ENCODE measurements at regions of chr4 and their contacts with region 1.

Region 1: GRCh38 chr4:6926681-6927478 is 17.3 kb downstream of the TBC1D14 start:
- DNase-seq: peak in 33 of 35 experiments; percentile 38 to 74 (median 63)
- ATAC-seq: peak; percentile 83 to 91 (median 88)
- H3K4me3 ChIP-seq: peak overlapping the region; percentile 0 to 15
- H3K4me3 Mint-ChIP-seq: peak overlapping the region; percentile 68 to 77 (median 72)
- H3K27ac ChIP-seq: peak overlapping the region; percentile 49
- H3K27ac Mint-ChIP-seq: peak overlapping the region; percentile 91 to 95
- H3K4me1 ChIP-seq: peaks cover 33 to 61% of the 10 kb centered on the region in 2 experiments
- H3K4me1 Mint-ChIP-seq: peaks cover 73 to 86% (median 86%) of the 10 kb centered on the region in 3 donors
- H3K27me3 ChIP-seq: no peaks in the 10 kb centered on the region
- H3K27me3 Mint-ChIP-seq: no peaks in the 10 kb centered on the region

Region 2: GRCh38 chr4:6942238-6942800 is 15.4 kb after region 1 on chr4:
- CTCF ChIA-PET with region 1: interaction called in 1 of 2 experiments, 10 read pairs
- POLR2A ChIA-PET with region 1: interaction called in 1 of 2 experiments, 3 read pairs
- DNase-seq: peak in 34 of 35 experiments; percentile 21 to 69 (median 48)
- ATAC-seq: peak; percentile 87 to 90 (median 88)
- H3K4me3 ChIP-seq: peak overlapping the region; percentile 11 to 35
- H3K4me3 Mint-ChIP-seq: peak overlapping the region; percentile 73 to 81 (median 75)
- H3K27ac ChIP-seq: peak overlapping the region; percentile 76
- H3K27ac Mint-ChIP-seq: peak overlapping the region; percentile 94 to 96
- H3K4me1 ChIP-seq: peaks cover 39 to 73% of the 10 kb centered on the region in 2 experiments
- H3K4me1 Mint-ChIP-seq: peaks cover 69 to 86% (median 82%) of the 10 kb centered on the region in 3 donors
- H3K27me3 ChIP-seq: no peaks in the 10 kb centered on the region
- H3K27me3 Mint-ChIP-seq: no peaks in the 10 kb centered on the region

Region 3: DNA sequence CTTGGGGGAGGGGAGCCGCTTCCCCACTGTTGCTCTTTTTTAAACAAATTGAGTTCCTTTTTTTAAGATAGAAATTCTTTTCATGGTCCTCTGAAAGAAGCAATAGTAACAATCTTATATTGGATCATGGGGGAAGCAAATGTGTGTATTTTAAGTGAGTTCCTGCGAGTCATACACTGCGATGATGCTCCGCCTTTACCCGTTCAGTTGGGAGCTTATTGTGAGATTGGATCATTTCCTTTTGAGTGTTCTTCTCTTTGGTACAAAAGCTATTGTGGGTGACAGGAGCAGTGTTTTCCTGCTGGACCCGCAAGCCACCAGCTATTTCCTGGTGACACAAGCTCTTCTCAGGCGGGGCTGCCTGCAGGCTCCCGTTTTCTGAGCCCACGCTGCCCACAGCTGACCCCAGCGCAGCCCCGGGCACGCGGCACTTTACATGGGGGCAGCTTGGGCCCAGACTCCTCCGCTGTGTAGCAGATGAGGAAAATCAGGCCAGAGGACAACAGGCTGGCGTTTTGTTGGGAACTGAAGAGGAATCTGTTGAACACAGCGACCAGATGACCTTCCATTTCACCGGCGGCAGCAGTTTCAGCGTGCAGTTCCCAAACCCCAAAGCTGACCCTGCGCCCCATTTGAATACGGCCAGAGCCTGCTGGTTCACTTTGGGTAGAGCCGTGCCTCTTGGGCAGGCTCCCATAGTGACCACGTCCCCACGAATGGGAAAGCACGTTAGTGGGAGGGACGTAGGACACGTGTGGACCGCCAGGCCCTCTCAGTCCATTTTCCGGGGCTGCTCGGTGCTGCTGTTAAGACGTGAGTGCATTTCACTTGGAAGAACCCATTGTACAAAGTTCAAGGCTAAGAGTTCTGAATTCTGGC is 128.5 kb after region 1 on chr4:
- CTCF ChIA-PET with region 1: no interaction called
- POLR2A ChIA-PET with region 1: no interaction called
- DNase-seq: no peak
- ATAC-seq: no peak
- H3K4me3 ChIP-seq: no peak overlapping the region
- H3K4me3 Mint-ChIP-seq: no peak overlapping the region
- H3K27ac ChIP-seq: no peak overlapping the region
- H3K27ac Mint-ChIP-seq: no peak overlapping the region
- H3K4me1 ChIP-seq: peaks cover 0 to 36% of the 10 kb centered on the region in 2 experiments
- H3K4me1 Mint-ChIP-seq: peaks cover 22 to 30% (median 24%) of the 10 kb centered on the region in 3 donors
- H3K27me3 ChIP-seq: no peaks in the 10 kb centered on the region
- H3K27me3 Mint-ChIP-seq: no peaks in the 10 kb centered on the region

Region 4: GRCh38 chr4:7876201-7876875 is 949.5 kb after region 1 on chr4:
- CTCF ChIA-PET with region 1: no interaction called
- POLR2A ChIA-PET with region 1: interaction called in 1 of 2 experiments, 13 read pairs
- DNase-seq: peak in 10 of 35 experiments; percentile 11 to 53 (median 26)
- ATAC-seq: peak; percentile 79 to 93 (median 91)
- H3K4me3 ChIP-seq: no peak overlapping the region
- H3K4me3 Mint-ChIP-seq: peak overlapping the region; percentile 15 to 72 (median 45)
- H3K27ac ChIP-seq: peak overlapping the region; percentile 55
- H3K27ac Mint-ChIP-seq: peak overlapping the region; percentile 87 to 97
- H3K4me1 ChIP-seq: peaks cover 0 to 27% of the 10 kb centered on the region in 2 experiments
- H3K4me1 Mint-ChIP-seq: peaks cover 20 to 67% (median 40%) of the 10 kb centered on the region in 3 donors
- H3K27me3 ChIP-seq: no peaks in the 10 kb centered on the region
- H3K27me3 Mint-ChIP-seq: no peaks in the 10 kb centered on the region

Measured in T-cell (primary cell).